ENCODE measurements at regions of chr15 and their contacts with region 1.

Region 1: GRCh38 chr15:66739788-66740187 is 37.8 kb downstream of the SMAD6 start:
- DNase-seq: no peak
- H3K4me3 ChIP-seq: no peak overlapping the region
- H3K27ac ChIP-seq: no peak overlapping the region
- H3K27me3 ChIP-seq: no peaks in the 10 kb centered on the region
- CTCF ChIP-seq: no peak

Region 2: DNA sequence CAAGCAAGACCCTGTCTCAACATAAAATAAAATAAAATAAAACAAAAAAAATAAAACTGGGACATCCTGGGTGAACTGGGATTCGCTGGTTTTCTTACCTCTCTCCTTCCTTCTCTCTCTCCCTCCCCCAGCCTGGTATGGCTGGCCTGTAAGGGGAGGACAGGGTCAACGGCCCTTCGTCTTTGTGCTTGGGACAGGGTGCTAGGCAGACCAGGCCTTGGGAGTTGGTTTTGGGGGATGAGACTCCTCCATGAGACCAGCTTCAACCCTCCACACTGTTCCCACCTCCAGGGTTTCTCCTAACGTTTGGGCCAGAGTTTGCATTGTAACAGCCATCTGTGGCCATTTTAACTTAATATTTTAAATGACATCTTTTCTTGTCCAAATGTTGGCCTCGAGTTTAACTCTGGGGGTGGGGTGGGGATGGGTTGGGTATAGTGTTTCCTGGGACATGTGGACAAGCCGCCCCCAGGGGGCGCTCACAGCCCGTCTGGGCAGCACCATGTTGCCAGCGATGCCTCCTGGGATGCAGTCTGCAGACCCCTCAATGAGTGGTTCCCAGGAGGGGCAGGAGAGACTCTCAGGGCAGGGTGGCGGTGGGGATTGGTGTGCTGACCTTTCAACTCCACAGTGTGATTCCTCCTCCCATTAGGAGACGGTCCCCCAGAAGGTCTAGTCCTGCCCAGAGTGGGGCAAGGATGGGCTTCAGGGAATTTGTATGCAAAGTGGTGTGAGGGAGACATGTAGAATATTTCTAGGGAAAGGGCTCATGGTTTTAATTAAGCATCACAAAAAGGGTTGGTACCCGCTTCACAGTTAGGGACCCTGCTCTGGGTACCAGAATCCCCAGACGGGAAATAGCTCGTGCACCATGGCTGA is 136.2 kb before region 1 on chr15:
- CTCF ChIA-PET with region 1: interaction called, 11 read pairs
- POLR2A ChIA-PET with region 1: no interaction called
- DNase-seq: peak; percentile 39
- H3K4me3 ChIP-seq: no peak overlapping the region
- H3K27ac ChIP-seq: no peak overlapping the region
- H3K27me3 ChIP-seq: peaks cover 10% of the 10 kb centered on the region
- CTCF ChIP-seq: peak; percentile 88